Ascending aorta (tissue), 2 donors: ENCODE measurements at regions of chr10 and their contacts with region 1.

Region 1: DNA sequence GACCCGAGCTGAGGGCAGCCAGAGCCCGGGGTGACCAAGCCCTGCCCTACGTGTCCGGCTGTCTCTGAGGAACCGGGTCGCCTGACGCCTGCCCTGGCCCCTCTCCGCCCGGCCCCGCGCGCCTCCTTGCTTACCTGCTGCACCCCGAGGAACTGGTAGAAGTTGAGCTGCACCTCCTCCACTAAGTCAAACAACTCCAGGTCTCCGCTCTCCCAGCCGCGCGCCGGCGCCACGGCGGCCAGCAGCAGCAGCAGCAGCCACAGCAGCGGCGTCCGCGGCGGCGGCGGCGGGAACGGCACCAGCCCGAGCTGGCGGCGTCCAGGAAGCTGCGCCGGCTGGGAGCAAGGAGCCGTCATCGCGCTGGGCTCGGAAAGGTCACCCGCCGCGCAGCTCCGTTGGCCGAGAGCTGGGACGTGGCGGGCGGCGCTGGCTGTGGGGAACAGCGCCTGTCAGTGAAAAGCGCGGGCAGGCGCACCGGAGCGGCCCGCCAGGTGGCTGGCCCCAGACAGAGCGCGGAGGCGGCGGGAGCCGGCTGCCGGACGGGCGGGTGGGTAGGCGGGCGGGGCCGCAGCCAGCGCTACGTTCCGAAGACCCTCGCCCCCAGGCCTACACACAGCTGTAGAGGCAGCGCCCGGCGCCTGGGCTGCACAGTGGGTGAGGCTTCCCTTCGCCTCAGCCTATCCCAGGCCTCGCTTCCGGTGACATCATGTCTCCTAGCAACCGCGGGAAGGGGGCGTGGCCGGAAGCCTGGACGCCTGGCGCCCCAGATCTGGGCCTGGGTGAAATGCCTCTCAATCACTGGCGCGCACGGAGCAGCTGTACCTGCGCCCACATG is at the start of gene DNAJC1:
- DNase-seq: peak; percentile 93 to 99
- H3K4me3 ChIP-seq: peak within 1 kb of the TSS; percentile 74 to 81
- H3K27ac ChIP-seq: peak within 1 kb of the TSS; percentile 96
- H3K4me1 ChIP-seq: peaks cover 0 to 6% of the 10 kb centered on the region in 2 donors
- H3K27me3 ChIP-seq: no peaks in the 10 kb centered on the region
- CTCF ChIP-seq: peak in 2 of 3 experiments; percentile 13 to 15
- total RNA-seq, gene DNAJC1: 26.1 TPM

Region 2: GRCh38 chr10:21464143-21464533 is 539.2 kb before region 1 on chr10:
- intact Hi-C with region 1: no loop called
- DNase-seq: peak in 1 of 2 donors; percentile 5
- H3K4me3 ChIP-seq: no peak overlapping the region
- H3K27ac ChIP-seq: no peak overlapping the region
- H3K4me1 ChIP-seq: no peaks in the 10 kb centered on the region
- H3K27me3 ChIP-seq: no peaks in the 10 kb centered on the region
- CTCF ChIP-seq: no peak

Region 3: DNA sequence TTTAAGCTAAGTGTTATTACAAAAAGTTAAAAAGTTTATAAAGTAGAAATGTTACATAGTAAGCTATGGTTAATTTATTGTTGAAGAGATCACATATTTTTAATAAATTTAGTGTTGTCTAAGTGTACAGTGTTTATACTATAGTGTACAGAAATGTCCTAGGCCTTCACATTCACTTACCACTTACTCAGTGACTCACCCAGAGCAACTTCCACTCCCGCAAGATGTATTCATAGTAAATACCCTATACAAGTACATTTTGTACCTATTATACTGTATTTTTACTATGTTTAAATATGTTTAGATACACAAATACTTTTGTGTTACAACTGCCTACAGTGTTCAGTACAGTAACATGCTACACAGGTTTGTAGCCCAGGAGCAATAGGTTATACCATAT is 69.0 kb before region 1 on chr10:
- intact Hi-C with region 1: no loop called
- DNase-seq: no peak
- H3K4me3 ChIP-seq: no peak overlapping the region
- H3K27ac ChIP-seq: no peak overlapping the region
- H3K4me1 ChIP-seq: no peaks in the 10 kb centered on the region
- H3K27me3 ChIP-seq: no peaks in the 10 kb centered on the region
- CTCF ChIP-seq: no peak

Region 4: GRCh38 chr10:22228943-22229801 is 225.9 kb after region 1 on chr10:
- intact Hi-C with region 1: loop called (anchors 2 kb)
- DNase-seq: peak; percentile 41 to 92
- H3K4me3 ChIP-seq: peak overlapping the region; percentile 63 to 70
- H3K27ac ChIP-seq: peak overlapping the region; percentile 80 to 85
- H3K4me1 ChIP-seq: peaks cover 0 to 3% of the 10 kb centered on the region in 2 donors
- H3K27me3 ChIP-seq: no peaks in the 10 kb centered on the region
- CTCF ChIP-seq: no peak

Region 5: DNA sequence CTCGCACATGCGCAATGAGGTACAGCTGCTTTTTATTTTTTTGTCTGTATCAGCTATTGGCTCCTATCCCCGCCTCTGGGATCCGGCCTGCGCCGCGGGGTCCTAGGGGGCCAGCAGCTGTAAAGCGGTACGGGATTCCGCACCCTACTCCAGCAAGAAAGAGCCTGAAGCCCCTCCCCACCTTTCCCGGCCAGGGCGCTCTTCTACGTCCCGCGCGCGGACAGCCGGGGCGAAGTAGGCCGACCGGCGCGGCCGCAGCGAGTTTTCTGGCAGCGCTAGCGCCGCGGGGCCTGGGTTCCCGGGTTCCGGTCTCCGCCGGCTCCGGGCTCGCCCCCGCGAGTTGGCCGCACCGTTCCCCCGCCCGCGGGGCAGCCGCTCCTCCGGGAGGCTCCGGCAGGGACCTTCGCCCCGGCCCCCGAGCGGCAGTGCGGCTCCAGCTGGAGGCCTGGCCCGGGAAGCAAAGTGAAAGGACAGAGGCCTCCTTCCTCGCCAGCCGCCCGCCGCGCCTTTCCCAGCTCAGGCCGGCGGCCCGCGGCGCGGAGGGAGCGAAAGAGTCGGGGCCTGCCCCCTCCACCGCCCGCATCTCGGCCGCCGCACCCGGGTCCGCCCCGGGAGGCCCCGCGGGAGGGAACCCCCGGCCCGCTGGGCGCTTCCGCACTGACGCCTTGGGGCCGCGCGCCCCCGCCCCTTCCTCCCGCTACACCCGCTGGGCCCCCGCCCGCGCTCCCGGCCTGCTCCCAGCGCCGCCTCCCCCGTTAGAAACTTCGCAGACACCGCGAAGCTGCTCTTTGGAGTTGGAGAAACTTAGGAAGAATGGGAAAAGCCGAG is 337.3 kb after region 1 on chr10:
- intact Hi-C with region 1: loop called (anchors 5 kb)
- DNase-seq: peak in 1 of 2 donors; percentile 84
- H3K4me3 ChIP-seq: peak overlapping the region; percentile 85 to 99
- H3K27ac ChIP-seq: peak overlapping the region; percentile 94 to 99
- H3K4me1 ChIP-seq: peaks cover 3 to 21% of the 10 kb centered on the region in 2 donors
- H3K27me3 ChIP-seq: peaks cover 62% of the 10 kb centered on the region
- CTCF ChIP-seq: no peak

Region 6: DNA sequence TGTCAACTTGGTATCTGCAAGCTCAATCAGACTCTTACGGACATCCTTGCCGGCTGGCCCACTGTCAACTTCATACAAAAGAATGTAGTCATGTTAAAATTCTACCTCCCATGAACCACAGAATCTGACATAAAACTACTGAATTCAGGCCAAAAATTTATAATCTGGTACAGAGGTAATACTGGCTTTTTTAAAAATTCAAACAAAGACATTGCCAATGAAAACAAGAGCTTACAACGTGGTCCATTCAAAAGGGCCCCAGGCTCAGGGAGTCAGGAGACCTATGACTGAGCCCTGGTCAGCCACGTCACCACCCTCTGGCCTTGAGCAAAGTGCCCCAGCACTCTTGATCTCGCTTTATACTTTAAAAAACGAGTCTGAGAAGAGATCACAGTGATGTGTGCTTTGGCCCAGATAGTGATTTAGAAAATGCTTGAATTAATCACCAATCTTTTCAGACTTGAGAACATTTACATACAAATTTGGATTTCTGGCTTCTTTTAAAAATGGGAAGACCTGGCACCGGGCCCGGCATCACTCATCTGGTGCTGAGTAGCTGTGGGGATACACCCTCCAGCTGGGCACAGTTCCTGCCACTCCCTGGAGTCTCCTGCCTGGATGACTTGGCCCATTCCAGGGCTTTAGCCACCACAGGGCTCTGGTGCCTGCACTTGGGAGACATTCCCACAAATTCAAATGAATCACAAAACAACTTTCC is 617.0 kb after region 1 on chr10:
- intact Hi-C with region 1: loop called (anchors 1 kb)
- DNase-seq: peak in 1 of 2 donors; percentile 92
- H3K4me3 ChIP-seq: no peak overlapping the region
- H3K27ac ChIP-seq: peak overlapping the region; percentile 47 to 64
- H3K4me1 ChIP-seq: peaks cover 5 to 43% of the 10 kb centered on the region in 2 donors
- H3K27me3 ChIP-seq: no peaks in the 10 kb centered on the region
- CTCF ChIP-seq: no peak